Sigmoid colon (tissue), 7 donors: ENCODE measurements at regions of chr17 and their contacts with region 1.

Region 1: DNA sequence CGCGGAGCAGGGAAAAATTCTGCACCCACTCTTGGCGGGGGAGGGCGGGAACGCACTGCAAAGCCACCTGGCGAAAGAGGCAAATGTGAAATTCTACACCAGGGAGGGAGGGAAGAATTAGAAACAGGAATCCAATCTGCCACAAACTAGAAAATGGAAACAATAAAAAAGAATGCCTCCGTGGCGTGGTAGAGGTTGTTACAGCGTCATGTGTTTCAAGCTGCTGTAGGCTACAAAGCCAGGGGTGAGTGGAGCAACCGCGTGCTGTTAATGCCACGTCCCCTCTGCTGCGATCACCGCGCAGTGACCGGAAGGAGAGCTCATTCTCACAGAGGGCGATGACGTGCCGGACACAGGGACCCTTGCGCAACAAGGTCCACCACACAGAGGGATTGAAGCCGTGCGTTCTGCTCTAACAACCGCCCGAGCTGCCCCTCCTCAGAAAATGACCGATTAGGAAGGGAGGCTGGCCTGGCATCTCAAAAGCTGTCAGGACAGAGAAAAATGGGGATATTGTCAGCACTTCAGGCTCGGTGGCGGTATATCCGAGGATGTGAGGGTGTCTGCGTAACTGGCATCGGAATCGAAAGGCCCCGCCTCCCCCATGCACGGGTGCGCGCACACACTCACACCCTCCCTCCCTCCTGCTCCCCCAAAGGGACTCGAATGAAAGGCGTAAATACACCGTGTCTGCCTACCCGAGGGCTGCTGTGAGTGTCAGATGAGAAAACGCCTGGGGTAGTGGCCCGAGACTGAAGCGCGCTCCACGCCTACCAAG is 70.8 kb upstream of the TNRC6C start:
- DNase-seq: peak; percentile 96
- H3K4me3 ChIP-seq: peak overlapping the region; percentile 45 to 61 (median 56)
- H3K27ac ChIP-seq: peak overlapping the region; percentile 65 to 76 (median 66)
- H3K4me1 ChIP-seq: peaks cover 5 to 19% (median 11%) of the 10 kb centered on the region in 4 donors
- H3K27me3 ChIP-seq: no peaks in the 10 kb centered on the region
- CTCF ChIP-seq: no peak
- EP300 ChIP-seq: peak in 1 of 4 donors; percentile 14
- POLR2A ChIP-seq: no peak

Region 2: DNA sequence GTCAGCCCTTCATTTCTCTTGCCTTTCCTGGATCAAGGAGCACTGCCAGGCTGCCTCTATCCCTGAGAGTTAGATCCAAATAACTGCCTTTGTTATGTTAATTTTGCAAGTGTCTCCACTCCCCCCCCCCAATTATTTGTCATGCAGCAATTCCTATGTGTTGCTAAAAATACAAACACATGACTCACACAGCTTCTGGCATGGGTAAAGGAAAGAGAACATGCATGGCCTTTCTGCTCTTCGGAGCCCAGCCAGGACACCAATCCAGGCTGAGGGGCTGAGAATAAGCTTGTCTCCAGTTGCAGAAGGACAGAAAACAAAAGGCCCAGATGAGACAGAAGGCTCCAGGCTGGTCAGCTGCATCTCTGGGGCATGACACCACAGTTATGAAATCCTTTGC is 77.1 kb before region 1 on chr17:
- intact Hi-C with region 1: loop called (anchors 5 kb)
- DNase-seq: peak; percentile 88
- H3K4me3 ChIP-seq: no peak overlapping the region
- H3K27ac ChIP-seq: peak overlapping the region in 3 of 4 donors; percentile 18 to 65 (median 61)
- H3K4me1 ChIP-seq: peaks cover 0 to 16% (median 14%) of the 10 kb centered on the region in 4 donors
- H3K27me3 ChIP-seq: no peaks in the 10 kb centered on the region
- CTCF ChIP-seq: no peak
- EP300 ChIP-seq: no peak
- POLR2A ChIP-seq: no peak

Region 3: DNA sequence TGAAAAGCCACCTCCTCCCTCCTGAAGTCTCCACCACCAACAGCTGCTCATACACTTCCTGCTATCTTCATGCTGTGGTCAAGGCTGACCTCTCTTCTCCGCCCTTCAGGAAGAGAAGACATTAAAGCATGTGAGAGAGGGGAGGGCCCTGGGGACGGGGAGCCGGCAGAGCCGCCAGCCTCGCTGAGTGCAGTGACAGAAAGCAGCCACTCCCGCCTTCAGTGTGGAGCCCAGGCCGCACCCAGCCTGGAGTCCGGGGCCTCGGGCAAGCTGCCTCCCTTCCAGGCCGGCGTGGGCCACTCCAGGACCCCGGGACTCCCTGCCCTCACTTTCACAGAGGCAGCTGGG is 23.9 kb before region 1 on chr17:
- intact Hi-C with region 1: no loop called
- DNase-seq: no peak
- H3K4me3 ChIP-seq: no peak overlapping the region
- H3K27ac ChIP-seq: peak overlapping the region; percentile 11 to 32 (median 24)
- H3K4me1 ChIP-seq: no peaks in the 10 kb centered on the region
- H3K27me3 ChIP-seq: no peaks in the 10 kb centered on the region
- CTCF ChIP-seq: no peak
- EP300 ChIP-seq: no peak
- POLR2A ChIP-seq: peak in 1 of 2 donors; percentile 24

Region 4: GRCh38 chr17:77942112-77942988 is 54.7 kb after region 1 on chr17:
- intact Hi-C with region 1: no loop called
- DNase-seq: no peak
- H3K4me3 ChIP-seq: no peak overlapping the region
- H3K27ac ChIP-seq: no peak overlapping the region
- H3K4me1 ChIP-seq: no peaks in the 10 kb centered on the region
- H3K27me3 ChIP-seq: no peaks in the 10 kb centered on the region
- CTCF ChIP-seq: no peak
- EP300 ChIP-seq: no peak
- POLR2A ChIP-seq: no peak

Region 5: GRCh38 chr17:77957857-77958715 is 70.4 kb after region 1 on chr17 and contains the start of gene TNRC6C:
- intact Hi-C with region 1: loop called (anchors 2 kb)
- DNase-seq: peak; percentile 100
- H3K4me3 ChIP-seq: peak within 1 kb of the TSS; percentile 50 to 79 (median 72)
- H3K27ac ChIP-seq: peak within 1 kb of the TSS; percentile 82 to 90 (median 86)
- H3K4me1 ChIP-seq: peaks cover 0 to 46% (median 31%) of the 10 kb centered on the region in 4 donors
- H3K27me3 ChIP-seq: no peaks in the 10 kb centered on the region
- CTCF ChIP-seq: no peak
- EP300 ChIP-seq: no peak
- POLR2A ChIP-seq: peak; percentile 100
- total RNA-seq, gene TNRC6C: 5.8 to 22.1 (median 18.2) TPM